Activated CD4-positive, alpha-beta memory T cell treated with anti-CD3 and anti-CD28 coated beads for 36 hours (primary cell): ENCODE measurements at regions of chr16 and their contacts with region 1.

Region 1: GRCh38 chr16:83898463-83899271 is at the start of gene MLYCD:
- DNase-seq: peak; percentile 79
- H3K4me3 Mint-ChIP-seq: peak within 1 kb of the TSS; percentile 94
- H3K27ac Mint-ChIP-seq: peak within 1 kb of the TSS; percentile 70
- H3K4me1 Mint-ChIP-seq: peaks cover 27% of the 10 kb centered on the region
- H3K27me3 Mint-ChIP-seq: no peaks in the 10 kb centered on the region
- total RNA-seq, gene MLYCD: 3.0 to 3.5 TPM

Region 2: DNA sequence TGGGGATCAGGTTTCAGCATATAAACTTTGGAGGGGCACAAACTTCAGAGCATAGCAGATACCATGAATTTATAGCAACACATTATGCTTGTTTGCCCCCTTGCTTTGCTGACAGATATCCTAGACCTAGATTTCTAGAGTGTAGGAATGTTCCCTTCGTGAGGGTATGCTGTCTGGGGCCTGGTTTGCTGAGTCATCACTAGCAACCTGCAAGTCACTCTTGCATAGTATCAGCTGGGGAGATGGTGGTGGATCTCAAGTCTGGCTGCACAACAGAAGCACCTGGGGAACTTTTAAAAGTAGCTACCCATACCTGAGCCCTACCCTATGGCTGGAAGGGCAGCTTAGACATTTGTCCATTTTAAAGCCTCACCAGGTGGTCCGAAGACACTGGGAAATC is 113.2 kb before region 1 on chr16:
- CTCF ChIA-PET with region 1: no interaction called
- POLR2A ChIA-PET with region 1: no interaction called
- intact Hi-C with region 1: no loop called
- DNase-seq: no peak
- H3K4me3 Mint-ChIP-seq: no peak overlapping the region
- H3K27ac Mint-ChIP-seq: no peak overlapping the region
- H3K4me1 Mint-ChIP-seq: no peaks in the 10 kb centered on the region
- H3K27me3 Mint-ChIP-seq: peaks cover 1% of the 10 kb centered on the region

Region 3: DNA sequence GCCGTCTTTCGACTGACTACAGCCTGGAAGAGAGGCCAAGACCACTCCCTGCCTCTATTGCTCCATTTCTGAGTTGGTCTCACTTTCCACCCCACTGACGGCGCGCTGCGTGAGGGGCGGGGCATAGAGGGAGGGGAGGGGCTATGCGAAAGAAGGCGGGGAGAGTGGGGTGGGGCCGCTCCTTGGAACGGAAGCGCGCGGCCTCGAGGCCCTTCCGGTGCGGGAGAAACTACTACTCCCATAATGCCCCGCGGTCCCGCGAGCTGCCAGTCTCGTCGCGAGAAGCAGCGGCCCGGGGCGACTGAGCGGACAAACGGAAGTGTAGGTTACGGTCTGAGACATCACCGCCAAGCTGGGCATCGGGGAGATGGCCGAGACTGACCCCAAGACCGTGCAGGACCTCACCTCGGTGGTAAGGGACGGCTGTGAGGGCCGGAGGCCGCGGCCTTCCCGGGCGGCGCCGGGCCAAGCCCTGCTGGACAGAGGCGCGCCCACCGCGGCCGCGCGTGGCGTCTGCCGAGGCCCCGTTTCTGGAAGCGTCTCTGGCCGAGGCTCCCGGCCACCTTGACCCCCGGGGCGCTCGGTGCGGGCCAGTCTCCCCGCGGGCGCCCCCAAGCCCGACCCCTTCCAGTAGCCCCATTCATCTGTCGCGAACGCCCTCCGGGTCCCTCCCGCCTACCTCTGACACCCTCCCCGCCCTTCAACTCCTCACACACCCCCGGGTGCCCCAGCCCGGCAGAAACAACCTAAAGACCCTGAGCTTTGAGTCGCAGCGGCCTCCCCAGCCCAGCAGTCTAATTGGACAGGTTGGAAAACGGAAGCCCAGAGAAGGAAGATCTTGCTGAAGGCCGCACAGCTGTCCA is 90.7 kb before region 1 on chr16 and contains the start of gene HSBP1:
- CTCF ChIA-PET with region 1: no interaction called
- POLR2A ChIA-PET with region 1: interaction called, 7 read pairs
- intact Hi-C with region 1: loop called (anchors 1 kb)
- DNase-seq: peak; percentile 96
- H3K4me3 Mint-ChIP-seq: peak within 1 kb of the TSS; percentile 98
- H3K27ac Mint-ChIP-seq: peak within 1 kb of the TSS; percentile 88
- H3K4me1 Mint-ChIP-seq: peaks cover 33% of the 10 kb centered on the region
- H3K27me3 Mint-ChIP-seq: no peaks in the 10 kb centered on the region
- total RNA-seq, gene HSBP1: 70.1 to 74.7 TPM

Region 4: DNA sequence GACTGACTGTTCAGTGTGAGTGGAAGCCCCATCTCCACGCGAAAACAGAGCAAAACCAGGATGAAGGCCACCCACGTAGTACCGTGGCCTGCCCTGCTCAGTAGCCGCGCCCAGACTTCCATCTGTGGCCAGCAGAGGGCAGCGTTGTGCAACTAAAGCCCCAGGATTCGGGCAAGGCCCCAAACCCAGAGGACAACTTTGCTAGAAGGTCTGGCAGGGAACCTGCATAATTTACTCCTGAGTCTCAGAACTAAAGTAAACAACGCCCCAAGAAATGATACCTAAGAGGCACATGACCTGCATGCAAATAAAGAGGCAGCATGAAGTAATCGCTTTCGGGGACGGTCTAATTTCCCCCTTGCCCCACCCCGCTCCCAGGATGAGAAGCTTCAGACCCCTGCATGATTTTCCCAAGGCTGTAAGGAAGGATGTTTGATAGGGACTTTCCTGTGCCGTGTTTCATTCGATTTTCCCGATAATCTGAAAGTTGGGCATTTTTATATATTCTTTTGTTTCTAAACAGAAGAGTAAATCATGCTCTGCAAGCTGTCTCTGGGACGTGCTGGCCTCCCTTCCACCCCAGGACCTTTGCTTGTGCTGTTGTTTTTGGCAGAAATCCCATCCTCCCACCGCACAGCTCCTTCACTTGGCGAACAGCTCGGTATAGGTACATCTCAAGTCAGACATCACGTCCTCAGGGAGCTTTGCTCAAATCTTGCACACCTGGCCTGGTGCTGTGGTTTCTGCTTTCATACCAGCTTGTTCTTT is 72.3 kb before region 1 on chr16:
- CTCF ChIA-PET with region 1: interaction called, 7 read pairs
- POLR2A ChIA-PET with region 1: no interaction called
- intact Hi-C with region 1: loop called (anchors 5 kb)
- DNase-seq: peak; percentile 87
- H3K4me3 Mint-ChIP-seq: no peak overlapping the region
- H3K27ac Mint-ChIP-seq: no peak overlapping the region
- H3K4me1 Mint-ChIP-seq: peaks cover 2% of the 10 kb centered on the region
- H3K27me3 Mint-ChIP-seq: peaks cover 6% of the 10 kb centered on the region